WTC11 (cell line): ENCODE measurements at regions of chr20 and their contacts with region 1.

Region 1: DNA sequence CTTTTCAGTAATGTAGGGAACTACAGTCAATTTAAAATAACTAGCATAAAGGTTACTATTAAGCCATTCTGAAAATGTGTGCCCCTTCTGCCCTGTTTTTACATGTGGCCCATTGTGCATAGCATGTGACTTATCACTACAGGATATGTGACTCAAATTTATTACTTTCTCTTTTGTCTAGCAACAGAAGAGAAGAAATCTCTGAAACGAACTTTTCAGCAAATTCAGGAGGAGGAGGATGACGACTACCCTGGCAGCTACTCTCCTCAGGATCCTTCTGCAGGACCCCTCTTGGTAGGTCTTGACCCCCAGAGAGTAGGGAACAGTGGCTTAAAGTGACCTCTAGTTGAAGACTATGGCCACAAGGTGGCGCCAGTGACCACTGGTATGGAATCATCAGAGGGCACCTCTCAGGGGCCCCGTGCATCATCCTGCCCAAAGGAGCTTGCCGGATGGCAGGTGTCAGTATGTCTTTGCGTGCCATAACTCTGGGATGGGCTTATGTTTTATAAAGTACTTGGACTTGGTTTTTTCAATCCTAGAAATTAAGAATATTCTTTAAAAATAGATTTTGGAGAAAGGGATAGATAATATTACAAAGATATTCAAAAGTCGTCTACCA is 23.9 kb downstream of the RPRD1B start:
- DNase-seq: peak; percentile 94
- ATAC-seq: peak; percentile 99
- H3K4me3 Mint-ChIP-seq: no peak overlapping the region
- H3K27ac Mint-ChIP-seq: peak overlapping the region; percentile 71
- H3K4me1 Mint-ChIP-seq: no peaks in the 10 kb centered on the region
- H3K27me3 Mint-ChIP-seq: no peaks in the 10 kb centered on the region
- CTCF ChIP-seq: peak; percentile 81

Region 2: DNA sequence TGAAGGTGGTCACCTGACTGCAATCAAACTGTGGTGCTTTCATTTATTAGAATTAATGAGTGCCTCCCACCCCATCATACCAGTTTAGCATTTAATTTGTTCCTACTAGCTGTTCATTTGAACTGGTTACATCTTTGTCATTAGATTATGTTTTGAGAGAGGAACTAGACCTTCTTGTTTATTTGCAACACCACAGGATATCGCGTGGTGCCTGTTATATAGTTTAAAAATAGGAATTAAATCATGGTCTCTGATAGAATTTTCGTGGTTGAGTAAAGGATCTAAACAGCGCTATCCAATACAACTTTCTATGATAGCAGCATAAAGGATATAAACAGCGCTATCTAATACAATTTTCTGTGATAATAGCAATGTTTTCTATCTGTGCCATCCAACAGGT is 21.1 kb before region 1 on chr20:
- CTCF ChIA-PET with region 1: interaction called, 11 read pairs
- POLR2A ChIA-PET with region 1: no interaction called
- DNase-seq: no peak
- ATAC-seq: no peak
- H3K4me3 Mint-ChIP-seq: no peak overlapping the region
- H3K27ac Mint-ChIP-seq: no peak overlapping the region
- H3K4me1 Mint-ChIP-seq: peaks cover 28% of the 10 kb centered on the region
- H3K27me3 Mint-ChIP-seq: no peaks in the 10 kb centered on the region
- CTCF ChIP-seq: no peak

Region 3: GRCh38 chr20:38067717-38068365 is 10.4 kb after region 1 on chr20:
- CTCF ChIA-PET with region 1: interaction called, 58 read pairs
- POLR2A ChIA-PET with region 1: no interaction called
- DNase-seq: no peak
- ATAC-seq: no peak
- H3K4me3 Mint-ChIP-seq: no peak overlapping the region
- H3K27ac Mint-ChIP-seq: no peak overlapping the region
- H3K4me1 Mint-ChIP-seq: peaks cover 2% of the 10 kb centered on the region; the same call in 1 of the 2 replicates
- H3K27me3 Mint-ChIP-seq: no peaks in the 10 kb centered on the region
- CTCF ChIP-seq: no peak

Region 4: DNA sequence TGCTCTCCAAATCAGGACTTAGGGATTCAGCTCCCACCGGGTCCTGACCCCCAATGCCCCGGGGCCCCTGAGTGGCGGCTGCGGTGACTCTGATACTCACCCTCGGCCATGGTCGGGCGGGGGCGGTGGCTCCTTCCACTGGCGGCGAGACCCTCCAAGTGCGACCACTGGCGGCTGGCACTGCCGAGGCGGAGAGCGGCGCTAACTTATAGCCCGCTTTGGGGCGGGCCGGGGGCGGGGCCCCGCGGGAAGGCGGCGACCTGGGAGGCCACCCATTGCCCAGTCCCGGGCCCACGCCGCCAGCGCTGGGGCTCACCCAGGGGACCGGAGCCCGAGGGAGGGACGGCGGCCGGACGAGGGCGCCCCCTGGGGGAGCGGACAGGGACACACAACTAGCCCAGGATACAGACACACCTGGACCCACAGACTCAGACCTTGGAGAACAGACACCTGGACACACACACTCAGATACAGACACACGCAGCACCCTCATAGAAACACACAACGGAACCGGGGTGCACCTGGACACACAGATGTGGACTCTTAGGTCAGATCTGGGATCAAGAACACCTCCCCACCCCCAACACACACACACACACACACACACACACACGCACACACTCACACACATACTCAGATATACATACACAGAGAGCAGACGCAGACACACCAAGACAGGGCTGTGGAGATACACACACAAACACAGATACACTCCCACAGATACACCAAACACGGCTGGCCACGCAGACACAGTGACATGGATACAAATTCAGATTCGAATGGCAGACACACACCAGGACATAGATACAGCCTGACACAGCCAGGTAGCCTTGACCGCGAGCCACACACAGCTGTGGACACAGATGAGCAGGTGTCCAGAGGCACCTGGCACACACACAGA is 107.9 kb after region 1 on chr20 and contains the start of gene TGM2:
- CTCF ChIA-PET with region 1: interaction called, 11 read pairs
- POLR2A ChIA-PET with region 1: no interaction called
- DNase-seq: peak; percentile 63
- ATAC-seq: peak; percentile 89
- H3K4me3 Mint-ChIP-seq: peak within 1 kb of the TSS; percentile 48
- H3K27ac Mint-ChIP-seq: no peak within 1 kb of the TSS
- H3K4me1 Mint-ChIP-seq: 0 out of 2 replicates have a peak, but pooled peaks cover 4% of the 10 kb centered on the region
- H3K27me3 Mint-ChIP-seq: no peaks in the 10 kb centered on the region
- CTCF ChIP-seq: peak; percentile 76
- total RNA-seq, gene TGM2: 1.5 to 2.1 TPM (median 1.8 TPM) in 3 replicates

Region 5: GRCh38 chr20:38221119-38221589 is 163.7 kb after region 1 on chr20:
- CTCF ChIA-PET with region 1: interaction called, 76 read pairs
- POLR2A ChIA-PET with region 1: interaction called, 4 read pairs
- DNase-seq: peak; percentile 95
- ATAC-seq: peak; percentile 95
- H3K4me3 Mint-ChIP-seq: no peak overlapping the region
- H3K27ac Mint-ChIP-seq: no peak overlapping the region
- H3K4me1 Mint-ChIP-seq: peaks cover 2% of the 10 kb centered on the region; the same call in 1 of the 2 replicates
- H3K27me3 Mint-ChIP-seq: no peaks in the 10 kb centered on the region; the same call in 1 of the 2 replicates
- CTCF ChIP-seq: peak; percentile 79